ENCODE measurements at regions of chr3 and their contacts with region 1.

Region 1: DNA sequence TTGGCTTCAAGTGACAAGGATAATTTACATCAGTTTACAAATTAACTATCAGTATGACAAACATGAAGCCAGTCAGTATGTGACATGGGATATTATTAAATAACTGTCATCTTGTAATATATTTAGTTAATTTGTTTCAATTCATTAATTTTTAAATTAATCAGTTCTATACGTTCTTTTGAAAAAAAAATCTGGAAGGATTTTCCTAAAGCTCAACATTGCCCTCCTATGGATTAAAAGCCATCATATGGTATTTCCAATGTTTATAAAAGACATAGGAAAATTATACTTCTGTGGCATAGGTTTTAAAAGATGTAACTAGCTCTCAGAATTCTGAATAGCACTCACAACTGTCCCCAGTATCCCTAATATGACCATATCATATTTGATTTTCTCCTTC is 134.4 kb downstream of the PLOD2 start:
- DNase-seq: peak; percentile 26
- ATAC-seq: no peak
- H3K4me3 ChIP-seq: no peak overlapping the region
- H3K27ac ChIP-seq: no peak overlapping the region
- H3K4me1 ChIP-seq: no peaks in the 10 kb centered on the region
- H3K27me3 ChIP-seq: no peaks in the 10 kb centered on the region
- CTCF ChIP-seq: peak; percentile 40; the same call in 1 of the 2 replicates

Region 2: DNA sequence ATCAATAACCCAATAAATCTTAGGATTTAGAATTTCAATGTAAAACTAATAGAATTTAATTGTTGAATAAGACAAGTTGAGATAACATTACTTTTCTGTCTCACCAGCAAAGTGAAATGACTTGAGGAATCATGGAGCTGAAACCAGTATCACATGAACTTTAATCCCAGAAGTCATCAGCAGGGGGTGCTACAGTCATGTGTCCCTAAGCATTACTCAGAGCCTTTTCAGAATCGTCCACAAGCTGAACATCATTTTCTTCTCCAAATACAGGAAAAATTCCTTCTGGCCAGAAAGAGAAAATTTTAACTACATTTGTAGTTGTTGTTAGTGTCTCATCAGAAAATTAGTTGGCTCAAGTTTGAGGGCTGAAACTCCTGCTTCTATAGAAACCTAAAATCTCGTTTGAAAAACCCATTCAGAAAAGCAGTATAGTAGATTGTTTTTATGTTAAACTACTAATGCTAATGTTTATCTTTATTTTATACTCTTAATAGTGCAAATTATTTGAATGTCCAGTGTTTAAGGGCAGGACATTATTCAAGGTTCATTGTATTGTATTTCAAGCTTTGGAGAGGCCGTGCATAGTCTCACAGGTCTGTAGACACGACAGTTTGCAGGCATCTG is 249.7 kb before region 1 on chr3:
- CTCF ChIA-PET with region 1: interaction called, 5 read pairs
- POLR2A ChIA-PET with region 1: interaction called, 6 read pairs
- intact Hi-C with region 1: loop called (anchors 1 kb)
- DNase-seq: peak; percentile 67
- ATAC-seq: peak; percentile 35; the same call in 1 of the 2 replicates
- H3K4me3 ChIP-seq: no peak overlapping the region
- H3K27ac ChIP-seq: no peak overlapping the region
- H3K4me1 ChIP-seq: no peaks in the 10 kb centered on the region
- H3K27me3 ChIP-seq: no peaks in the 10 kb centered on the region
- CTCF ChIP-seq: peak; percentile 72

Region 3: DNA sequence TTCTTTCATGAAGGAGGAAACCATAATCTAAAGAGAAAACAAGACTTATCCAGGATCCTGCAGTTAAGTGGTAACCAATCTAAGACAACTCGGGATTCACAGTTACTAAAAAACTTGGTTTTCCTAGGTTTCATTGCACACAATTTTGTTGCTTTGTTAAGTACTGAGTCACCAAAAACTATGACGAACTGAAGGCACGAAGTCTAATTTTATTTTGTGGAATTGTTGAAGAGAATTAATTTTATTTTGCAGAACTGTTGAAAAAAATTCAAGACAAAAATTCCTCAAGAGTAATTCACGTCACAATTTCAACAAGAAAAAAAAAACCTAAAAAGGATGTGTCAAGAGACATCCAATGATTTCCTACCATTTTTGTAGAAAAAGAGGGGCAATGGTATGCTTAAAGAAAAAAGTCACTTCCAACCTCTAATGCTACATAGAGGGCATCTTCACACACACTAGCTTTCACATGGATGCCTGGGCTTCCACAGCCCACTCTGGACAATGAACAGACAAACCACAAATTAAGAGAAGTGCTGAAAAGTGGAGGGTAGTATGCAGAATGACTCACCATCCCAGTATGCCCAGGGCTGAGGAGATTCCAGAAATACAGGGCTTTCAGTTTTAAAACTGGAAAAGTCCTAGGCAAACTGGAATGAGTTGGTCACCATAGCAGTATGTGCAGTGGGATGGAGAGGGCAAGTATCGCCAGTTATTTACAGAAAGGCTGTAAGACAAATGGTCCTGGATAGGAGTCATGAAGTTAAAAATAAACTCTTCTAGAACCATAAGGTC is 105.3 kb after region 1 on chr3:
- CTCF ChIA-PET with region 1: no interaction called
- POLR2A ChIA-PET with region 1: no interaction called
- intact Hi-C with region 1: no loop called
- DNase-seq: peak; percentile 71
- ATAC-seq: peak; percentile 69
- H3K4me3 ChIP-seq: no peak overlapping the region
- H3K27ac ChIP-seq: no peak overlapping the region
- H3K4me1 ChIP-seq: peaks cover 14% of the 10 kb centered on the region
- H3K27me3 ChIP-seq: no peaks in the 10 kb centered on the region
- CTCF ChIP-seq: no peak

Region 4: DNA sequence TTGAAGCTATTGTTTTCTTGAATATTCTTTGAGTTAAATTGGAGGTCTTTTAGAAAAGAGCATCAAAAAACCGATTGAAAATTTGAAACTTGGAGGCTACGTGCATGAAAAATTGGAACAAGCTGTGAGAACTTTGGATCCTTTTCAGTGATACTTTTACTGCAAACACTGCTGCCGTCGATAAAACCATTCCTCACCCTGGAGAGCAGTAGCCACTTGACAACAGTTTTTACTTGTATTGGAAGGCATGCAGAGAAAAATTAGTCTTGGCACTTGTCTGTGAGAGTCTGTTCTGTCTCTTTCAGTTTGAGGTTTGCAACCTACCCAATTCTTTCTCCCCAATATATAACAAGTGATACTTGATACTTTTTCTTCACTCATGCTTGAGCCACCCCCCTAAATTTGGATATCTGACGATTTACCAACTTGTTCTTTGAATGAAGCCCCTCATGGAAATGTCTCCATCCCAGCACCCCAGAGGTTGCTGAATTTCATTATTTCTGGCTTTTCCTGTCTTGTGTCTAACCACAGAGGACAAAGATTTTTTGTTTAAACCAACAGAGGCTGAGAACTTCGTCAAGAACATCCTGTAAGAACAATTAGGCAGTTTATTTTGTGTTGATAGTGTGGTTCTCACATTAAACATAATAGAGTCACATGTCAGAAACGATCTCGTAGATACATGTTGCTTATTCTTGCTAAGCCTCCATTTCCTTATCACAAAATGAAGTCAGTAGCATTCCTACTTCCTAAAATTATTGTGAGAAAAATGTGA is 885.9 kb after region 1 on chr3:
- CTCF ChIA-PET with region 1: no interaction called
- POLR2A ChIA-PET with region 1: no interaction called
- intact Hi-C with region 1: no loop called
- DNase-seq: no peak
- ATAC-seq: no peak
- H3K4me3 ChIP-seq: no peak overlapping the region
- H3K27ac ChIP-seq: no peak overlapping the region
- H3K4me1 ChIP-seq: no peaks in the 10 kb centered on the region
- H3K27me3 ChIP-seq: peaks cover 38% of the 10 kb centered on the region
- CTCF ChIP-seq: no peak